Activated T-helper 1 cell treated with anti-CD3 and anti-CD28 coated beads, Interleukin-12 subunit alpha, Interleukin-12 subunit beta, Interleukin-2, Interleukin-4 antibody, amounts not matched to agents 30 ng/mL and 10 ng/mL and 1 ng/mL, durations not matched to agents 14 hours and 24 hours and 36 hours (primary cell): ENCODE measurements at regions of chr10 and their contacts with region 1.

Region 1: DNA sequence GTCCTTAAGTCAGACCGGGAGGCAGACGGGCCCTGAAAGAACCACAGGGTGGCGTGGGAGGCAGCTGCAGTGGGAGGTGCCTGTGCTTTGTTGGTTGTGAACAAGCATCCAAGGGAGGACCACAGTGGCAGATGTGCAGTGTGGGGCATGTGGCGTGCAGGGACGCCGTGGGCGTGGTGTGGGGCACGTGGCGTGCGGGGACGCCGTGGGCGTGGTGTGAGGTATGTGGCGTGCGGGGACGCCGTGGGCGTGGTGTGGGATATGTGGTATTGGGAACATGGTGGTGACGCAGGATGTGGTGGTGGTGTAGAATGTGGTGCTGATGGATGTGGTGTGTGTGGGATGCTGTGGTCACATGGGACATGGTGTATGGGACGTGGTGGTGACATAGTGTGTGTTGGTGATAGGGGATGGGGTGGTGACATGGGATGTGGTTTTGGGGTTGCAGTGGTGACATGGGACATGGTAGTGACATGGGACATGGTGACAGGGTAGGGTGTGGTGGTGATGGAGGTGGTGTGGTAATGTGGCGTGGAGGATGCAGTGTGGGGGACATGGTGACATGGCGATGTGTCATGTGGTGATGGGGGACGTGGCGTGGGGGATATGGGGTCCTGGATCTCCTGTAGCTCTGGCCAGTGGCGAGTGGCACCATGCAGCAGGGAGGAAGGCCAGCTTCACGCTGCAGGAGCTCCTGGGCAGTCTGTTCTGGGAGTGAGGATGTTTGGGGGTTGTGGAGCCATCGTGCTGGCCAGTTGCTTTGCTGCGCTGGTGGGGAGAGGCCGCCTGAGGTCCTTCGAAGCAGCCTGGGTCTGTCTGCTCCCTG is 78.8 kb downstream of the INPP5A start:
- DNase-seq: peak; percentile 52
- H3K4me3 Mint-ChIP-seq: peak overlapping the region; percentile 10
- H3K27ac Mint-ChIP-seq: peak overlapping the region; percentile 85
- H3K4me1 Mint-ChIP-seq: peaks cover 14% of the 10 kb centered on the region
- H3K27me3 Mint-ChIP-seq: peaks cover 4% of the 10 kb centered on the region

Region 2: GRCh38 chr10:132360766-132361447 is 255.5 kb before region 1 on chr10:
- intact Hi-C with region 1: loop called (anchors 10 kb)
- DNase-seq: no peak
- H3K4me3 Mint-ChIP-seq: no peak overlapping the region
- H3K27ac Mint-ChIP-seq: no peak overlapping the region
- H3K4me1 Mint-ChIP-seq: peaks cover 8% of the 10 kb centered on the region
- H3K27me3 Mint-ChIP-seq: no peaks in the 10 kb centered on the region

Region 3: DNA sequence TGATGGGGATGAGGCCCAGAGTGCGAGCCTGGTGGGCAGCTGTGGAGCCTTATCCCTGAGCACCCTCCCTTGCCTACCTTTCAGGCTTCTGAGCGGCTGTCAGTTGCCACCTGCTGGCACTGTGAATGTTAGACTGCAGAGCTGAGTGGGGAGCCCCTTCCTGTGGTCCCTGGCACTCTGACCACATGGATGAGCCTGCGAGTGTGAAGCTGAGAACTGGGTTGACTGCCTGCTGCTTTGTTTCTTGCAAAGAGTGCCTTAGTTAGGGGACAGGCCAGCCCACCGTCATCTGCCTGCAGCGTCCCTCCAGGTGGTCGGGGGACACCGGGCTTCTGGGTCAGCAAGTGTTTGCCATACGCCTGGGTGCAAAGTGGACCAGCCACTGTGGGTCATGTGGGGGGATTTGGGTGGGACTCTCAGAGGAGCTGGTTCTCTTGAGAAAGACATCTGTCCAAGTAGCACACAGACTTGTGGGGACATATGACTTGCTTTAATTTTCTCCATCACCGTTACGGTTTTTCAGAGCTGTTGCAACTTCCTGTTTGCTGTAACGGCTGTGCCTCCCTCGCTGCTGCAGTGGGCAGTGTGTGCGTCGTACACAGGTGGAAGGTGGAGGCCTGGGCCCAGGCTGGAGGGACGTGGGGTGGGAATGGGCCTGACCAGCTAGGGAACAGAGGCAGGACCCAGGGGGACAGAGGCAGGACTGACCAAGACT is 65.1 kb before region 1 on chr10:
- intact Hi-C with region 1: no loop called
- DNase-seq: no peak
- H3K4me3 Mint-ChIP-seq: peak overlapping the region; percentile 50
- H3K27ac Mint-ChIP-seq: peak overlapping the region; percentile 81
- H3K4me1 Mint-ChIP-seq: peaks cover 1% of the 10 kb centered on the region
- H3K27me3 Mint-ChIP-seq: no peaks in the 10 kb centered on the region

Region 4: GRCh38 chr10:132571650-132572535 is 44.5 kb before region 1 on chr10:
- intact Hi-C with region 1: loop called (anchors 1 kb)
- DNase-seq: peak; percentile 73
- H3K4me3 Mint-ChIP-seq: no peak overlapping the region
- H3K27ac Mint-ChIP-seq: peak overlapping the region; percentile 86
- H3K4me1 Mint-ChIP-seq: peaks cover 25% of the 10 kb centered on the region
- H3K27me3 Mint-ChIP-seq: peaks cover 7% of the 10 kb centered on the region

Region 5: DNA sequence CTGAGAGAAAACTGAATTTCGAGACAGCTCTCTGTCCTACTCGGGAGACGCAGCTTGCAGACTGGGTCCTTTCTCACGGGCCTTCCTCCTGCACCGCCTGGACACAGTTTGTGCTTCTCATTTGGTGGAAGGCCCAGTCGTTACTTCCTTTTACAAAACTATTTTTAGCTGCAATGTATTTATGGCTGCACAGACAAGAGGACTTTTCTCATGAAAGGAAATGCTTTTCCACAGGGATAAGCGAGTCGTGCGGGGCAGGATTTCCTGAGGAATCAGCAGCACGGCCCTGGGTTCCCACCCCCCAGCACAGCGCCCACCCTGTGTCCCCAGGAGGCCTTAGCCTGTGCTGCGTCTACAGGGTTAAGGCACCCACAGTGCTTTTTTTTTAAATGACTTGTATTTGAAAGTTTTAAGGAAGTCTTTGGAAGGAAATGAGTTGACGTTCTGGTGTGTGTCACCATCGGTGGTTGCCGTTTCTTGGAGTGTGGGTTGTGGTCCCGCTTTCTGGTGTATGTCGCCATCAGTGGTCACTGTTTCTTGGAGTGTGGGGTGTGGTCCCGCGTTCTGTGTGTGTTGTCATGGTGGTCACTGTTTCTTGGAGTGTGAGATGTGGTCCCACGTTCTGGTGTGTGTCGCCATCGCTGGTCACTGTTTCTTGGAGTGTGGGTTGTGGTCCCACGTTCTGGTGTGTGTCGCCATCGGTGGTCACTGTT is 27.9 kb before region 1 on chr10:
- intact Hi-C with region 1: loop called (anchors 2 kb)
- DNase-seq: peak; percentile 25
- H3K4me3 Mint-ChIP-seq: peak overlapping the region; percentile 62
- H3K27ac Mint-ChIP-seq: peak overlapping the region; percentile 83
- H3K4me1 Mint-ChIP-seq: peaks cover 27% of the 10 kb centered on the region
- H3K27me3 Mint-ChIP-seq: peaks cover 2% of the 10 kb centered on the region

Region 6: GRCh38 chr10:132687181-132687890 is 71.0 kb after region 1 on chr10:
- intact Hi-C with region 1: no loop called
- DNase-seq: no peak
- H3K4me3 Mint-ChIP-seq: no peak overlapping the region
- H3K27ac Mint-ChIP-seq: no peak overlapping the region
- H3K4me1 Mint-ChIP-seq: peaks cover 10% of the 10 kb centered on the region
- H3K27me3 Mint-ChIP-seq: no peaks in the 10 kb centered on the region

Region 7: DNA sequence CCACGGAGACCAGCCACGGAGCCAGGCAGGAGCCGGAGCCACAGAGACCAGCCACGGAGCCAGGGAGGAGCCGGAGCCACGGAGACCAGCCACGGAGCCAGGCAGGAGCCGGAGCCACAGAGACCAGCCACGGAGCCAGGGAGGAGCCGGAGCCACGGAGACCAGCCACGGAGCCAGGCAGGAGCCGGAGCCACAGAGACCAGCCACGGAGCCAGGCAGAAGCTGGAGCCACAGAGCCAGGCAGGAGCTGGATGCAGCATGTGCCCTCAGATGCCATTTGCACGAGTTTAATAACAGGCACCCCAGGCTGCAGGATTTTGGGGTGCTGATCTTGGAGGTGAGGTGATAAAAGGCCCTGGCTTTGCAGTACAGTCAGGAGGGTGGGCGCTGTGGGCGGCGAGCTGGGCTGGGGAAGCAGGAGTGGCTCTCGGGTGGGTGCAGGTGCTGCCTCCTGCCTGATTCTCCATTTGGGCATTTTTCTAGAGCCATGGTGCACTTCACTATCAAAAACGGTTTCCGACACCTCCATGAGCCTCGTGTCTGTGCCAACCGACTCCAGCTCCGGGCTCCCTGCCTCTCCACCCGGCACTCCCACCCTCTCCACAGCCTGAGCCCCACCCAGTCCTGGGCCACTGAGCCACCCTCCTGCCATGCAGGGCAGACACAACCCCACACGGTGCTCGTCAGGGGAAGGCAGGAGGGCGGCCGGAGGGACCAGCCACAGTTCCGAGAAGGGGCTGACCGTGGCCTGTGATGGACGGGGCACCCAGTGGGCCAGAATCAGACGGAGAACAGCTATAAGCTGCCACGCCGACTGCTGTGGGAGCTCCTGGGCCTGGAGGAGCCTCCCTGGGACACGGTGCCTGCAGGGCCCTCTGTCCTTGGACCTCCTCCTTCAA is 210.4 kb after region 1 on chr10:
- intact Hi-C with region 1: no loop called
- DNase-seq: no peak
- H3K4me3 Mint-ChIP-seq: no peak overlapping the region
- H3K27ac Mint-ChIP-seq: no peak overlapping the region
- H3K4me1 Mint-ChIP-seq: no peaks in the 10 kb centered on the region
- H3K27me3 Mint-ChIP-seq: peaks cover 3% of the 10 kb centered on the region